Activated CD8-positive, alpha-beta T cell treated with anti-CD3 and anti-CD28 coated beads, Interleukin-2, amount 10 ng/mL, durations not matched to agents 7 days and 5 days (primary cell): ENCODE measurements at regions of chr9 and their contacts with region 1.

Region 1: GRCh38 chr9:5851445-5851844 is 18.5 kb upstream of the ERMP1 start:
- DNase-seq: peak; percentile 73
- ATAC-seq: peak; percentile 92
- H3K4me3 Mint-ChIP-seq: peak overlapping the region; percentile 37
- H3K27ac Mint-ChIP-seq: peak overlapping the region; percentile 75
- H3K4me1 Mint-ChIP-seq: peaks cover 66% of the 10 kb centered on the region
- H3K27me3 Mint-ChIP-seq: no peaks in the 10 kb centered on the region

Region 2: DNA sequence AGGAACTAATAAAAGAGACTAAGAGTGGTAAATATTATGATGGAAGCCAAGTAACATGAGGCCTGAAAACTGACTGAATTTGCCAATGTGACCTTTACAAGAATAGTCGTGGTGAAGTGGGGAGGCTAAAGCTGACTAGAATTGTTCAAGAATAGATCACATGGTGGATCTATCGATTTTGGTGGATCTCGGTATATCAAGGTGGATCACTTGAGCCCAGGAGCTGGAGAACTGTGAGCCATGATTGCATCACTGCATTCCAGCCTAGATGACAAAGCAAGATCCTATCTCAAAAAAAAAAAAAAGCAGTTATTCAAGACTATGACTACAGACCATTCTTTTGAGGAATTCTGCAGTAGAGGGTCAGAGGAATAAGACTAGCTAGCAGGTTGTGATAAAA is 33.6 kb before region 1 on chr9:
- CTCF ChIA-PET with region 1: no interaction called
- POLR2A ChIA-PET with region 1: no interaction called
- DNase-seq: no peak
- ATAC-seq: no peak
- H3K4me3 Mint-ChIP-seq: no peak overlapping the region
- H3K27ac Mint-ChIP-seq: no peak overlapping the region
- H3K4me1 Mint-ChIP-seq: peaks cover 12% of the 10 kb centered on the region
- H3K27me3 Mint-ChIP-seq: no peaks in the 10 kb centered on the region

Region 3: GRCh38 chr9:5869315-5870019 is 18.0 kb after region 1 on chr9:
- CTCF ChIA-PET with region 1: interaction called, 11 read pairs
- POLR2A ChIA-PET with region 1: no interaction called
- DNase-seq: peak; percentile 35
- ATAC-seq: no peak
- H3K4me3 Mint-ChIP-seq: no peak overlapping the region
- H3K27ac Mint-ChIP-seq: peak overlapping the region; percentile 22
- H3K4me1 Mint-ChIP-seq: peaks cover 19% of the 10 kb centered on the region
- H3K27me3 Mint-ChIP-seq: no peaks in the 10 kb centered on the region

Region 4: DNA sequence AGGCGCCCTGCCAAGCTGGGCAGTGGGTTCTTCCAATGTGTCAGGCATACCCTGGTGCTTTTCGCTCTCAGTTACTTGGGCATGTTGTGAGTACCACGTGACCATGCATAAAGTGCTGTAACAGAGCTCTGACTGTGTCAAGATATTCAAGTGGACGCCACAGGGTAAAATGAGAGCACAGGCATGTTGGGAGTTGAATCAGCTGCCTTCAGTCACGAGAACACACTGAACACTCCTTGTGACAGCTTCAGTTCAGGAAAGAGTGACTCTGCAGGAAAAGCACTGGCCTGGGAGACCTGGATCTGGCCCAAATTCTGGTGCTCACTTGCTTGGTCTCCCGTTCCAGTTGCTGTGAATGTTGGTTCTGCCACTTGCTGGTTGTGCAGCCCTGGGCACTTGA is 44.3 kb after region 1 on chr9:
- CTCF ChIA-PET with region 1: no interaction called
- POLR2A ChIA-PET with region 1: no interaction called
- DNase-seq: no peak
- ATAC-seq: no peak
- H3K4me3 Mint-ChIP-seq: no peak overlapping the region
- H3K27ac Mint-ChIP-seq: no peak overlapping the region
- H3K4me1 Mint-ChIP-seq: no peaks in the 10 kb centered on the region
- H3K27me3 Mint-ChIP-seq: no peaks in the 10 kb centered on the region